A549 (cell line): ENCODE measurements at regions of chr1 and their contacts with region 1.

Region 1: GRCh38 chr1:164786980-164787833 is 228.2 kb downstream of the PBX1 start:
- DNase-seq: peak; percentile 85 to 88
- ATAC-seq: peak; percentile 96 to 97
- H3K4me3 ChIP-seq: no peak overlapping the region
- H3K27ac ChIP-seq: peak overlapping the region; percentile 89 to 94
- H3K4me1 ChIP-seq: peaks cover 38% of the 10 kb centered on the region
- CTCF ChIP-seq: peak; percentile 89
- EP300 ChIP-seq: peak in 1 of 2 experiments; percentile 18; a peak in 1 of 5 replicates
- POLR2A ChIP-seq: no peak
- RAD21 ChIP-seq: peak; percentile 97 to 99

Region 2: DNA sequence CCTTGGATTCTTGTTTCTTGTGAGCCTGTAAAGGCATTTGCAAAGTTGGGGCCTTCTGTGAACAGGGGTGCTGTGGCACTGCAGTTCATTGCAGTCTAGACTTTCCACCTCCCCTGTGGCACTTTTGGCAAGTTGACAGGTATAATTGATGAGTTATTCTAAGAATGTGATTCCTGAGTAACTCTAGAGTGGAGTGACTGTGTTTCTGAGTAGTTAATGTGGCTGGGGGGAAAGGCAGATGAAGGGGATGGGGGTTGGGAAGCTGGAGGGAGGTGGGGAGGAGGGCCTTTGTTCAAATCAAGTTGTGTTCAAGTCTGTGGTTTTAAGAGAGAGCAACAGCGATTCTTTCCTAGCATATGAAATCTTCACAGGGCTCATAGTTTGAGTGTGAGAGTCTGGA is 195.3 kb before region 1 on chr1:
- CTCF ChIA-PET with region 1: interaction called, 11 read pairs
- POLR2A ChIA-PET with region 1: no interaction called
- DNase-seq: no peak
- ATAC-seq: peak in 1 of 2 experiments; percentile 21; a peak in 3 of 6 replicates
- H3K4me3 ChIP-seq: no peak overlapping the region
- H3K27ac ChIP-seq: peak overlapping the region; percentile 26 to 86; a peak in 4 of 6 replicates
- H3K4me1 ChIP-seq: peaks cover 60% of the 10 kb centered on the region
- CTCF ChIP-seq: no peak
- EP300 ChIP-seq: no peak
- POLR2A ChIP-seq: no peak
- RAD21 ChIP-seq: no peak

Region 3: GRCh38 chr1:164702216-164702615 is 85.0 kb before region 1 on chr1:
- CTCF ChIA-PET with region 1: interaction called, 11 read pairs
- POLR2A ChIA-PET with region 1: no interaction called
- DNase-seq: peak; percentile 6 to 42
- ATAC-seq: peak; percentile 37 to 62; a peak in 3 of 6 replicates
- H3K4me3 ChIP-seq: no peak overlapping the region
- H3K27ac ChIP-seq: peak overlapping the region; percentile 56 to 68
- H3K4me1 ChIP-seq: peaks cover 76% of the 10 kb centered on the region
- CTCF ChIP-seq: no peak
- EP300 ChIP-seq: no peak
- POLR2A ChIP-seq: no peak
- RAD21 ChIP-seq: no peak

Region 4: DNA sequence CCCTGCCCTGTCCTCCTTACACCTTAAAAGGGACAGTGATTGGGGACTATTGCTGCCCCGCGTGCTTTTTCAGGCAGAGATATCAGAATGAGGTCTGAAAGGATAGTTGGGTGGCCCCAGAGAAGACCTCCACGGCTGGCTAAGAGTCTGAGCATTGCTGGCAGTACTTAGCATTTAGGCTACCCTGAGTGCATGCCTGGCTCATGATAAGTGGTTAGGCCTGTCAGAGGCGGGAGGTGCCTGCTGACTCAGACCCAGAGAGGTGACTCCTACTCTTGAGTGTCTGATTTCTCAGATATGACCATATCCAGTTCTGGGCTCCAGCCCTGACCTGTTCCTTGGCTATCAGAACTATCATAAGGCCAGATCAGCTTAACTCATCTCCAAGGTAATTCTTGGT is 14.6 kb before region 1 on chr1:
- CTCF ChIA-PET with region 1: interaction called, 45 read pairs
- POLR2A ChIA-PET with region 1: interaction called, 3 read pairs
- DNase-seq: peak; percentile 47 to 89
- ATAC-seq: peak; percentile 93 to 95
- H3K4me3 ChIP-seq: no peak overlapping the region
- H3K27ac ChIP-seq: peak overlapping the region; percentile 90 to 94
- H3K4me1 ChIP-seq: peaks cover 98% of the 10 kb centered on the region
- CTCF ChIP-seq: no peak
- EP300 ChIP-seq: 0 out of 5 replicates have a peak, but pooled peaks of 1 of the 2 experiments have one; percentile 37
- POLR2A ChIP-seq: no peak
- RAD21 ChIP-seq: 0 out of 5 replicates have a peak, but pooled peaks of 1 of the 2 experiments have one; percentile 9

Region 5: GRCh38 chr1:165073185-165074007 is 286.2 kb after region 1 on chr1:
- CTCF ChIA-PET with region 1: interaction called, 17 read pairs
- POLR2A ChIA-PET with region 1: no interaction called
- DNase-seq: peak; percentile 37 to 59
- ATAC-seq: peak in 1 of 2 experiments; percentile 87; a peak in 4 of 6 replicates
- H3K4me3 ChIP-seq: no peak overlapping the region
- H3K27ac ChIP-seq: peak overlapping the region in 1 of 2 experiments; percentile 57; a peak in 3 of 6 replicates
- H3K4me1 ChIP-seq: peaks cover 5% of the 10 kb centered on the region; the same call in 1 of the 3 replicates
- CTCF ChIP-seq: peak; percentile 89
- EP300 ChIP-seq: no peak
- POLR2A ChIP-seq: no peak
- RAD21 ChIP-seq: peak; percentile 87 to 92